Calu3 (cell line): ENCODE measurements at regions of chr19 and their contacts with region 1.

Region 1: GRCh38 chr19:51660975-51661600 is 14.5 kb upstream of the SIGLEC14 start:
- DNase-seq: peak; percentile 82
- H3K4me3 Mint-ChIP-seq: no peak overlapping the region
- H3K27ac Mint-ChIP-seq: no peak overlapping the region
- H3K4me1 Mint-ChIP-seq: peaks cover 10% of the 10 kb centered on the region
- H3K27me3 Mint-ChIP-seq: peaks cover 59% of the 10 kb centered on the region
- CTCF ChIP-seq: peak; percentile 53

Region 2: DNA sequence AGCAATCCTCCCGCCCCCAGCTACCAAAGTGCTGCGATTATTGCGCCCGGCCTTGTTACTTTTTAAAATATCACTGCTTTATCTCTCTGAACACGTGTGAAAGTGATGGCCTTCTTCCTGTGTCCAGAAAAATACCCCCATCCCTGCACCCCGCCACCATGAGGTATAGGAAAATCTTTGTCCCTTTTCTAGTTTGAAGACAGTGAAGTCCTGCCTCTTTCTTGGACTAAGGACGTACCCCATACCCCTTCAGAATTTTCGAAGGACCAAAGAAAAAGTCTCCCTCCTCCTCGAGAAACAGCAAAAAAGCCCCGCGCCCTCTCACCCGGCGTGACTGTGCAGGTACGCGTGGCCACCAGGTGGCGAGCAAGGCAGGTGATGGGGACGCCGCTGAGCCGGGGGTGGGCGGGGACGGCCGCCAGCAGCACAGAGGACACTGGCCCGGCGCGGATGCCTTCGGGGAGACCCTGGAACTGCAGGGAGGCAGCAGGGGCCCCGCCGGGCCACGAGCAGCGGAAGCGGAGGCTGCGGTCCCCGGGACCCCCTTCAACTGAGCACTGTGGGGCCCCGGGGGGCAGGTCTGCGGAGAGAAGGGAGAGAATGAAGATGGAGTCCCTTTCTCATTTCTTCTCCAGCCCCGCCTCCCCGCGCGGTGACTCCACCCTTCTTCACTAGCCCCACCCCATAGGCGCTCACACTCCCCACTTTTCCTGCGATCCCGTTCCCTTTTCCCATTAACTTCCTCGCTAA is 322.4 kb before region 1 on chr19:
- CTCF ChIA-PET with region 1: interaction called, 11 read pairs
- intact Hi-C with region 1: loop called (anchors 5 kb)
- DNase-seq: peak; percentile 91
- H3K4me3 Mint-ChIP-seq: peak overlapping the region; percentile 72
- H3K27ac Mint-ChIP-seq: no peak overlapping the region
- H3K4me1 Mint-ChIP-seq: peaks cover 30% of the 10 kb centered on the region
- H3K27me3 Mint-ChIP-seq: no peaks in the 10 kb centered on the region
- CTCF ChIP-seq: peak; percentile 98

Region 3: DNA sequence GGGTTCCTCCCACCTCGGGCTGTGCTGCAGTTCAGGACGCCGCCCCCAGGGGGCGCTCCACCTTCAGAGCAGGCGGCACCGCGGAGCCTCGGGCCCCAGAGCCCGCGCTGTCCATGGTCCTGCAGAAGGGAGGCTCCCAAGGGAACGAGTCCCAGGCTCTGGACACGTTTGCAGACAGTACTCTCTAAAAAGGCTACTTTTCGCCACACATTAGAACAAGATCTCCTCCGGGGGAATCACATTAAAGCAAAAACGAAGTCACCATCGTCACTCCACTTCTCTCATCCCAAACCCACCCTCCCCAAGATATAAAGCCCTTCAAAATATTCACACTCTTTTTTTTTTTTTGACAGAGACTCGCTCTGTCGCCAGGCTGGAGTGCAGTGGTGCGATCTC is 239.0 kb before region 1 on chr19:
- CTCF ChIA-PET with region 1: interaction called, 25 read pairs
- intact Hi-C with region 1: loop called (anchors 1 kb)
- DNase-seq: peak; percentile 97
- H3K4me3 Mint-ChIP-seq: no peak overlapping the region
- H3K27ac Mint-ChIP-seq: no peak overlapping the region
- H3K4me1 Mint-ChIP-seq: no peaks in the 10 kb centered on the region
- H3K27me3 Mint-ChIP-seq: peaks cover 80% of the 10 kb centered on the region
- CTCF ChIP-seq: peak; percentile 99

Region 4: GRCh38 chr19:51503286-51503817 is 157.7 kb before region 1 on chr19:
- CTCF ChIA-PET with region 1: no interaction called
- intact Hi-C with region 1: no loop called
- DNase-seq: no peak
- H3K4me3 Mint-ChIP-seq: no peak overlapping the region
- H3K27ac Mint-ChIP-seq: no peak overlapping the region
- H3K4me1 Mint-ChIP-seq: no peaks in the 10 kb centered on the region
- H3K27me3 Mint-ChIP-seq: peaks cover 39% of the 10 kb centered on the region
- CTCF ChIP-seq: no peak

Region 5: DNA sequence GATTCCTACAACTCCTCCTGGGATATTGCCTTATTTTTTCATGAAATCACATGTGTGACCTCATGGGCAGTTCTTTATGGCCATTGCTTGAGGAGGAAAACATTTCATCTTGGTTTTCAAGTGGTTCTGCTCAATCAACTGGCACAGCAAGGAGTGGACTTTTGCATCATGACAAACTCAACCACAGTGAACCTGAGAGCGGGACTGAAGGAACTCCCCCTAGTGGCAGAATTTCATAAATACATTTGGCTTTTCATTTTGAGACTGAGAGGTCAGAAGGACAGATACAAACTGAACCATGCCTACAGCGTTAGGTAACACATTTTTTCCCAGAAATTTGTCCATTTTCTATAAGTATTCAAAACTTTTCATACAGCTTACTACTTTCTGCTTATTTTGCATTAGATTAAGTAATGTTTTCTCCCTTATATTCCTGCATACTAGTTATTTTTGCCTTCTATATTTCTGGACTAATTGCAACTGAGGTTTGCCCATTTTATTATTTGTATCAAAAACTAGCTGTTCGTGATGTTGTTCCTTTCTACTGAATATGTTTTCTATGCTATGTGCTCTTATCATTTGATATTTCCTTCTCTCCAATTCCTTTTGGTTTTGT is 146.1 kb before region 1 on chr19:
- CTCF ChIA-PET with region 1: interaction called, 11 read pairs
- intact Hi-C with region 1: no loop called
- DNase-seq: peak; percentile 56
- H3K4me3 Mint-ChIP-seq: no peak overlapping the region
- H3K27ac Mint-ChIP-seq: no peak overlapping the region
- H3K4me1 Mint-ChIP-seq: no peaks in the 10 kb centered on the region
- H3K27me3 Mint-ChIP-seq: peaks cover 16% of the 10 kb centered on the region
- CTCF ChIP-seq: peak; percentile 85

Region 6: DNA sequence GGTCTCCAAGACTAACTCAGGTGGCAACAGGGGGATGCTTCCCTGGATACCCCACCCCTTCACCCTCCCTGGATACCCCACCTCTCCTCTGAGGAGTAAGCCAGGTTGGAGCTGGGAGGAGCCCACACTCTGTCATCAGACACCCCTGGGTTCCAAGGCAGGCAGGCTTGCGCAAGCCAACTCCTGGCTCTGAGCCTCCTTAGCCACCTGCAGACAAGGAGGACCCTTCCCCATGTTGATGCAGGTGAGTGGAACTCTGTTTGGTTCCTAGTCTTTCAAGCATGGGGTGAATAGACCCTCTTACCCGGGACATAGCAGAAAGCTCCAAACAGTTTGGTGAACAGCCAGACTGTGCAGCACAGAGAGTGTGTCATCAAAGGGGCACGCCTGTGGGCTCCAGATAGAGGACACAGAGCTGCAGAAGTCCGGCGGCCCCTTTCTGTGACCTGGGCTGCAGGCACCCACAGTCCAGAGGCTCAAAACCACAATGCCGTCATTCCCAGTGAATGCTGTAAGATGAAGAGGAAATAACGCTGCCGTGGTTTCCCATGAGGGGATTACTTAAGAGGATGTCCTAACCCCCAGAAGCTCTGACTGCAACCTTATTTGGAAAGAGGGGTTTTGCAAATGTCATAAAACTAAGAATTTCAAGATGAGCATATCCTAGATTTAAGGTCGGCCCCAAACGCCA is 74.8 kb after region 1 on chr19:
- CTCF ChIA-PET with region 1: no interaction called
- intact Hi-C with region 1: no loop called
- DNase-seq: no peak
- H3K4me3 Mint-ChIP-seq: no peak overlapping the region
- H3K27ac Mint-ChIP-seq: no peak overlapping the region
- H3K4me1 Mint-ChIP-seq: no peaks in the 10 kb centered on the region
- H3K27me3 Mint-ChIP-seq: peaks cover 32% of the 10 kb centered on the region
- CTCF ChIP-seq: no peak

Region 7: DNA sequence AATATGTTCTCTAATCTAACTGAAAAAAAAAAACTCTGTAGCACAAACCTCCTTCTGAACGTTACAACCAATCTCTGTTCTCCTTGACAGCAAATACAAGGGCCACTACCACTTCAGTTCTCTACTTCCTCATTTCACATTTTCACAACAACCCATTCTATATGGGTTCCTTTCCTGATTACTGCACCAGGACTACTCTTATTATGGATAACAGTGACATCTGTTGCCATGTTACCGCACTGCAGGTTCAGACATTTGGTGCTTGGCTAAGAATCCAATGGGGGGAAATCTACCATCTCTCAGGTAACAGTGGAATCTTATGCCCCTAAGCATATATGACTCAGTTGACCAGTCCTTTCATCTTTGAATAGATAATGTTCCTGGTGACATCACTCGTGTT is 122.3 kb after region 1 on chr19:
- CTCF ChIA-PET with region 1: interaction called, 10 read pairs
- intact Hi-C with region 1: loop called (anchors 2 kb)
- DNase-seq: peak; percentile 22
- H3K4me3 Mint-ChIP-seq: no peak overlapping the region
- H3K27ac Mint-ChIP-seq: no peak overlapping the region
- H3K4me1 Mint-ChIP-seq: no peaks in the 10 kb centered on the region
- H3K27me3 Mint-ChIP-seq: no peaks in the 10 kb centered on the region
- CTCF ChIP-seq: no peak

Region 8: DNA sequence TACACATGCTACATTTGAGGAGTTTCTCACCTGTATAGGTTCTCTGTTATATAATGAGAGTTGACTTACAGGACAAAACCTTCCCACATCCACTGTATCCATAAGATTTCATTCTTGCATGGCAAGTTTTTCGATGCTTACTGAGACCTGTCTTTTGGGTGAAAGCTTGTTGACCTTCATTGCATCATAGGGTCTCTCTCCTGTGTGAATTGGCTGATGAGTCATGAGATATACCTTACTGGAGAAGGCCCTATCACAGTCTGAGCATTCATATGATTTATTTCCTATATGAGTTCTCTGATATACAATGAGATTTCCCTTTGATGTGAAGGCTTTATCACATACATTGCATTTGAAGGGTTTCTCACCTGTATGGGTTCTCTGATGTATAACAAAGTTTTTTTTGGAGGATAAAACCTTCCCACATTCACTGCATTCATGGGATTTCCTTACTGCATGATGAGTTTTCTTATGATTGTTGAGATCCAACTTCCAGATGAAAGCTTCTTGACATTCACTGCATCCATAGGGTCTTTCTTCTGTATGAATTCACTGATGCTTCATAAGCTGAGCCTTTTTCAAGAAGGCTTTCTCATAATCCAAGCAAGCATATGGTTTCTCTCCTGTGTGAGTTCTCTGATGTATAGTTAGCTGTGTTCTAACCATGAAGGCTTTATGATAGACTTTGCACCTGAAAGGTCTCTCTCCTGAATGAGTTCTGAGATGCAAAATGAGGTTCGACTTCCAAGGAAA is 201.0 kb after region 1 on chr19:
- CTCF ChIA-PET with region 1: no interaction called
- intact Hi-C with region 1: no loop called
- DNase-seq: no peak
- H3K4me3 Mint-ChIP-seq: no peak overlapping the region
- H3K27ac Mint-ChIP-seq: no peak overlapping the region
- H3K4me1 Mint-ChIP-seq: no peaks in the 10 kb centered on the region
- H3K27me3 Mint-ChIP-seq: no peaks in the 10 kb centered on the region
- CTCF ChIP-seq: no peak

Region 9: DNA sequence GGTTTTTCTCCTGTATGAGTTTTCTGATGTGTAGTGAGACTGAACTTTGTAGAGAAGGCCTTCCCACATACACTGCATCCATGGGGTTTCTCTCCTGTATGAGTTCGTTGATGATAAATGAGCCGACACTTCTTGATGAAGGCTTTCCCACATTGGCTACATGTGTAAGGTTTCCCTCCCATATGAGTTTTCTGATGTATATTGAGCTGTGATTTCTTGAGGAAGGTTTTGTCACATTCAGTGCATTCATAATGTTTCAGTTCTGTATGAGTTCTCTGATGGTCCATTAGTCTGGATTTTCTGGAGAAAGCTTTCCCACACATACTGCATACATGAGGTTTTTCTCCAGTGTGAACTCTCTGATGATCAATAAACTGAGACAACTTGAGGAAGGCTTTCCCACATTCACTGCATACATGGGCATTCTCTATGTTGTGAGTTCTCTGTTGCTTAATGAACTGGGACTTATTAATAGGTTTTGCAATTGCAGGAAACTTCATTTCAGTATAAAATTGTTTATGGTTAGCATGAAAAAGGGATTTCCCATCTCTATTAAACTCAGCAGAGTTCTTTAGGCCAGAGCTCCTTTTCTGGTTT is 333.1 kb after region 1 on chr19:
- CTCF ChIA-PET with region 1: no interaction called
- intact Hi-C with region 1: no loop called
- DNase-seq: no peak
- H3K4me3 Mint-ChIP-seq: no peak overlapping the region
- H3K27ac Mint-ChIP-seq: no peak overlapping the region
- H3K4me1 Mint-ChIP-seq: no peaks in the 10 kb centered on the region
- H3K27me3 Mint-ChIP-seq: no peaks in the 10 kb centered on the region
- CTCF ChIP-seq: no peak